Mammary epithelial cell (primary cell): ENCODE measurements at regions of chr11 and their contacts with region 1.

Region 1: GRCh38 chr11:77820563-77821348 is at the starts of genes AAMDC and RSF1:
- DNase-seq: peak; percentile 98
- H3K4me3 ChIP-seq: peak within 1 kb of the TSS; percentile 93 to 99 (median 98)
- H3K27ac ChIP-seq: peak within 1 kb of the TSS; percentile 60
- H3K4me1 ChIP-seq: peaks cover 5% of the 10 kb centered on the region
- H3K27me3 ChIP-seq: no peaks in the 10 kb centered on the region
- CTCF ChIP-seq: peak; percentile 34 to 88
- total RNA-seq, gene AAMDC: 7.8 to 14.0 TPM
- total RNA-seq, gene RSF1: 23.0 to 46.6 TPM

Region 2: GRCh38 chr11:77789061-77789730 is 31.6 kb before region 1 on chr11:
- CTCF ChIA-PET with region 1: no interaction called
- dilution Hi-C with region 1: no loop called
- in situ Hi-C with region 1: no loop called
- intact Hi-C with region 1: loop called (anchors 2 kb)
- DNase-seq: no peak
- H3K4me3 ChIP-seq: no peak overlapping the region
- H3K27ac ChIP-seq: no peak overlapping the region
- H3K4me1 ChIP-seq: peaks cover 10% of the 10 kb centered on the region
- H3K27me3 ChIP-seq: no peaks in the 10 kb centered on the region
- CTCF ChIP-seq: no peak

Region 3: DNA sequence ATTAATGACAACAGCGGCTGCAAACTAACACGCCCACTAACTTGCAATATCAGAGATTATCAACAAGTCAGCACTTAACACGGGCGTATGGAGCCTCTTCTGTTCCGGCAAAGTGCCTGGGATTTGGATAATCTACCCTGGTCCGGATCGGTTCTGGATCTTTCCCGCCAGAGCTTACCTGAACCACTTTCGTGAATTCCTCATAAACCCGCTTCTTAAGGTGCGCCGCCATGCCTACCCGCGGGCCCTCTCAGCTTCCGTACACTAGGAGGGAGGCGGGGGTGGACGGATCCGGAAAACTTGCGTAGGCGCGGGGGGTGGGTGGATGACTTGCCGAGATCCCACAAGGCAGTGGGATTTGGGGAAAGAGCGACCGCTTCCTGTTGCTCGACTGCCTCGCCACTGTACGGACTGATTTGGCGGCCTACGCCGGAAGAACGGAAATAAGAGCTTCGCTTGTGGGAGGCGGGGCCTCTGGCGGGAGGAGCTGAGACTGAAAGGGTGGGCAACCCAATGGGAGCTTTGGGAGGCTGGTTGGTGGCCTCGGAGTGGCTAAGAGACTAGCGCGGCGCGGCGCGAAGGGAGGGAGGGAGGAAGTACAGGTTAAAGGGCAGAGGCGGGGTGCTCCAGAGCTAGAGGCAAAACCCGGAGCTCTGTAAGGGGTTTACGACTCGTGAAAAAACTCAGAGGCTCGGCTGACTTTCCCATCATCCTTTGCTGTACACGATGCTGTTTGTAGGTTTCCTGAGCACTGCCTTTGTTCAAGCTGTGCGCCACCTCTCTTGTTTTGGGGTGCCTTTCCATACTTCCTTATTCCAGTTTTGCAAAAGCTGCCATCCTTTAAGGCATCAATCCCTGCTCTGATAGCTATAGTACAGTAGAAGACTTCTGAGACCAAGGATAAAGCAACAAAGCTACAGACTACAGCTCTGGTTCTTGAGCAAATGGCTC is 173.9 kb after region 1 on chr11 and contains the start of gene INTS4:
- CTCF ChIA-PET with region 1: no interaction called
- dilution Hi-C with region 1: no loop called
- in situ Hi-C with region 1: no loop called
- intact Hi-C with region 1: loop called (anchors 1 kb)
- DNase-seq: peak; percentile 100
- H3K4me3 ChIP-seq: peak within 1 kb of the TSS; percentile 66 to 87 (median 85)
- H3K27ac ChIP-seq: peak within 1 kb of the TSS; percentile 46
- H3K4me1 ChIP-seq: peaks cover 14% of the 10 kb centered on the region
- H3K27me3 ChIP-seq: no peaks in the 10 kb centered on the region
- CTCF ChIP-seq: no peak
- total RNA-seq, gene INTS4: 25.0 to 28.0 TPM

Region 4: DNA sequence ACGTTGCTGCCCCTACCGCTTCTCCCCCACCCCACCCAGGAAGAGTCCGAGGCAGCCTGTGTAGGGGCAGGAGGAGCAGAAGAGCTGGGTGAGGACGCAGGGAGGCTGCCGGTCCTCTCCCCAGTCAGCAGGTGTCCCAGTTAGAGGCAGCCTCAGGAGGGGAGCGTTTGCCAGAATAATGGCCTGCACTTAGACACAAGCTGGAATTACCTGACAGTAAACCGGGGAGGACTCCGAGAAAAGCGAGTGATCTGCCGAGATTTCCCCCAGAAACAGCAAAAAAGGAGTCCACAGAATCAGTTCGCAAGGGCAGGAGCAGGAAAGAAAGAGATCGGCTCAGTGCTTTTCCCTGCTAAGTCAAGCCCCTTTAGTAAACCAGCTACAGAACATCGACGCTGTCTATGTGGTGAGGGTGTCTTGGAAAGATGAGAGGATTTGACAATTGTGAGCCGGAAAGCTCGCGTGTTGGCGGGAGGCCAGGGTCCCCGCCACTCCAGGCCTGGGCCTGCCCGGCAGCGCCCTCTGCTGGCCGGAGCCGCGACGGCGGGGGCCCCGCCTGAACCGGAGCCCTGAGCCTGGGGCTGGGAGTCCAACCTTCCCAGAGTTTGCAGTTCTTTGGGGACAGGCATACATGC is 225.2 kb after region 1 on chr11:
- CTCF ChIA-PET with region 1: no interaction called
- dilution Hi-C with region 1: no loop called
- in situ Hi-C with region 1: no loop called
- intact Hi-C with region 1: loop called (anchors 1 kb)
- DNase-seq: peak; percentile 52
- H3K4me3 ChIP-seq: peak overlapping the region; percentile 14 to 44 (median 36)
- H3K27ac ChIP-seq: no peak overlapping the region
- H3K4me1 ChIP-seq: peaks cover 13% of the 10 kb centered on the region
- H3K27me3 ChIP-seq: no peaks in the 10 kb centered on the region
- CTCF ChIP-seq: peak; percentile 89 to 100

Region 5: GRCh38 chr11:78100676-78101456 is 280.1 kb after region 1 on chr11:
- CTCF ChIA-PET with region 1: no interaction called
- dilution Hi-C with region 1: no loop called
- in situ Hi-C with region 1: no loop called
- intact Hi-C with region 1: no loop called
- DNase-seq: no peak
- H3K4me3 ChIP-seq: no peak overlapping the region
- H3K27ac ChIP-seq: no peak overlapping the region
- H3K4me1 ChIP-seq: no peaks in the 10 kb centered on the region
- H3K27me3 ChIP-seq: no peaks in the 10 kb centered on the region
- CTCF ChIP-seq: no peak